PC-9 (cell line): ENCODE measurements at regions of chr1 and their contacts with region 1.

Region 1: DNA sequence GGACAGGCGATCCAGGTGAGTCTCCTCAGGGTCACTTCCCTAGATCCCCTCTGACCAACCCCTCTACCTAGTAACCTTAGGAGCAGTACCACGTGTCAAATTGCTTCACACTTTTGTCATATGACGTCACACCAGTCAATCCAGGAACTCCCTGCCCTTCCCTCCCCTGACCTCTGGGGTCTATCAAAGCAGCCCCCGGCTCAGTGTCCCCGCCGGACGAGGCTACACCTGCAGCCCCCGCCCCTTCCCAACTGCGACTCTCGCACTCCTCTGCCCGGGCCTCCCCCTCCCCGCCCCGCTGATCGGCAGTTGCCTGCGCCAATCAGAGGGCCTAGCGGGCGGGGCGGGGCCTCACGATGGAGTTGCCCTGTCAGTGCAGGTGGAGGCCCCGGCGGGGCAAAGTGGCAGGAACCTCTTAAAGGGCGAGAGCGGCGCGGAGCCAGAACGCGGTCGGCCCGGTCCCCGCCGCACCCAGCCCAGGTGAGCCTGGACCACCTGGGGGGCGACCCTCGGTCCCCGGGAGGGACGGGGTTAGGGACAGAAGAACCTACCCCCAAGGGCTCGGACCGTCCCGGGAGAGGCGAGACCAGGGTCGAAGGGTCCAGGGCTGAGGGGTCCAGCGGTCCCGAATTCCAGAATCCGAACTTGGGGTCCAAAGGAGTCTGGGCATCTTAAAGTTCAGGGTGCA is 27.5 kb upstream of the EPB41 start:
- DNase-seq: peak; percentile 71 to 89
- H3K4me3 ChIP-seq: peak overlapping the region; percentile 75
- H3K27ac ChIP-seq: no peak overlapping the region; the same call in 1 of the 2 replicates
- H3K4me1 ChIP-seq: peaks cover 23% of the 10 kb centered on the region
- H3K27me3 ChIP-seq: no peaks in the 10 kb centered on the region
- CTCF ChIP-seq: no peak

Region 2: DNA sequence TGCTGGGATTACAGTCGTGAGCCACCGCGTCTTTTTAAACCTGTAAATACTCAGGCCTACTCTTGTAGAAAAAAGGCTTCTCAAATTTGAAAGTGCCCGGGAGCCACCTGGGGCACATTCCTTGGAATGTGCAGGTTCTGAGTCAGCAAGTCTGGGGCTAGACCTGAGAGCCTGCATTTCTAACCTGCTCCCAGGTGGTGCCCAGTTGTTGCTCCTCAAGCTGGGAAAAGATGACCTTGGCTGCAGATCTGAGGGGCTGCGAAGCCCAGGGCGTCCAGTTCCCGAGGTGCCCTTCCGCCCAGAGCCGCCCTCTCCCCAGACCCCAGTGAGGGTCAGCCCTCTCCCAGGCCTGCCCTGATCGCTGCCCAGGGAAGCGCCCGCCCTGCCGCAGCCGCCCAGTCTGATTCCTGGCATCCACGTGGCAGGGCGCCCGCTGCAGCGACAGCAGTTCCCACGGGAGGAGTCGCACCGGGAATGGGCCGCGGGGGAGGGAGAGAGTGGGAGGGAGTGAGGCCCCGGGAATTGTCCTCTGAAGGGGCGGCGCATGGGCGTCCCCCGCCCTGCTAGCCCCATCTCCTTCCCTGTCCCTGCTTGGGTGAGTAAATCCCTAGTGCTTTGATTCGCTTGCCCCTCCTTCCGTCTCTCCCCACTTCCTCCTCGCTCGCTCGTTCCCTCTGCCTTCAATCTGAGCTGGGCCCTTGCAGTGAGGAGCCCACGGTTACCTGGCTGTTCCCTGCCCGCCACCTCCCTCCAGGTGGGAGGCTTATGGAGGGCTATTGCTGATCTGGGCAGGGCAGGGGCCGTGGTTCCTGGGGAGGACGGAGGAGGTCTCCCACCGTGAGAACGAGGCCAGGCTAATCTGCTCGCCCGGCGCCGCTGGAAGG is 1855.4 kb before region 1 on chr1:
- CTCF ChIA-PET with region 1: no interaction called
- POLR2A ChIA-PET with region 1: interaction called, 20 read pairs
- intact Hi-C with region 1: no loop called
- DNase-seq: peak; percentile 76 to 93
- H3K4me3 ChIP-seq: peak overlapping the region; percentile 59; the same call in 1 of the 2 replicates
- H3K27ac ChIP-seq: peak overlapping the region; percentile 81
- H3K4me1 ChIP-seq: peaks cover 5% of the 10 kb centered on the region; the same call in 1 of the 2 replicates
- H3K27me3 ChIP-seq: no peaks in the 10 kb centered on the region
- CTCF ChIP-seq: no peak

Region 3: GRCh38 chr1:28914228-28915030 is 27.6 kb after region 1 on chr1 and contains the start of gene EPB41:
- CTCF ChIA-PET with region 1: interaction called, 4 read pairs
- POLR2A ChIA-PET with region 1: no interaction called
- intact Hi-C with region 1: loop called (anchors 2 kb)
- DNase-seq: peak; percentile 73 to 90
- H3K4me3 ChIP-seq: peak within 1 kb of the TSS; percentile 54
- H3K27ac ChIP-seq: no peak within 1 kb of the TSS
- H3K4me1 ChIP-seq: 0 out of 2 replicates have a peak, but pooled peaks cover 5% of the 10 kb centered on the region
- H3K27me3 ChIP-seq: no peaks in the 10 kb centered on the region
- CTCF ChIP-seq: no peak
- total RNA-seq, gene EPB41: 36.0 and 42.2 TPM in 2 replicates

Region 4: GRCh38 chr1:29033829-29034466 is 147.1 kb after region 1 on chr1:
- CTCF ChIA-PET with region 1: interaction called, 26 read pairs
- POLR2A ChIA-PET with region 1: interaction called, 4 read pairs
- intact Hi-C with region 1: loop called (anchors 1 kb)
- DNase-seq: peak in 1 of 2 experiments; percentile 40
- H3K4me3 ChIP-seq: no peak overlapping the region
- H3K27ac ChIP-seq: no peak overlapping the region
- H3K4me1 ChIP-seq: no peaks in the 10 kb centered on the region
- H3K27me3 ChIP-seq: no peaks in the 10 kb centered on the region
- CTCF ChIP-seq: peak; percentile 72

Region 5: GRCh38 chr1:29202584-29203340 is 315.9 kb after region 1 on chr1:
- CTCF ChIA-PET with region 1: interaction called, 8 read pairs
- POLR2A ChIA-PET with region 1: interaction called, 3 read pairs
- intact Hi-C with region 1: loop called (anchors 1 kb)
- DNase-seq: peak; percentile 89 to 90
- H3K4me3 ChIP-seq: peak overlapping the region; percentile 23; the same call in 1 of the 2 replicates
- H3K27ac ChIP-seq: peak overlapping the region; percentile 63
- H3K4me1 ChIP-seq: peaks cover 9% of the 10 kb centered on the region
- H3K27me3 ChIP-seq: no peaks in the 10 kb centered on the region
- CTCF ChIP-seq: peak; percentile 87